ENCODE measurements at regions of chr1 and their contacts with region 1.

Region 1: DNA sequence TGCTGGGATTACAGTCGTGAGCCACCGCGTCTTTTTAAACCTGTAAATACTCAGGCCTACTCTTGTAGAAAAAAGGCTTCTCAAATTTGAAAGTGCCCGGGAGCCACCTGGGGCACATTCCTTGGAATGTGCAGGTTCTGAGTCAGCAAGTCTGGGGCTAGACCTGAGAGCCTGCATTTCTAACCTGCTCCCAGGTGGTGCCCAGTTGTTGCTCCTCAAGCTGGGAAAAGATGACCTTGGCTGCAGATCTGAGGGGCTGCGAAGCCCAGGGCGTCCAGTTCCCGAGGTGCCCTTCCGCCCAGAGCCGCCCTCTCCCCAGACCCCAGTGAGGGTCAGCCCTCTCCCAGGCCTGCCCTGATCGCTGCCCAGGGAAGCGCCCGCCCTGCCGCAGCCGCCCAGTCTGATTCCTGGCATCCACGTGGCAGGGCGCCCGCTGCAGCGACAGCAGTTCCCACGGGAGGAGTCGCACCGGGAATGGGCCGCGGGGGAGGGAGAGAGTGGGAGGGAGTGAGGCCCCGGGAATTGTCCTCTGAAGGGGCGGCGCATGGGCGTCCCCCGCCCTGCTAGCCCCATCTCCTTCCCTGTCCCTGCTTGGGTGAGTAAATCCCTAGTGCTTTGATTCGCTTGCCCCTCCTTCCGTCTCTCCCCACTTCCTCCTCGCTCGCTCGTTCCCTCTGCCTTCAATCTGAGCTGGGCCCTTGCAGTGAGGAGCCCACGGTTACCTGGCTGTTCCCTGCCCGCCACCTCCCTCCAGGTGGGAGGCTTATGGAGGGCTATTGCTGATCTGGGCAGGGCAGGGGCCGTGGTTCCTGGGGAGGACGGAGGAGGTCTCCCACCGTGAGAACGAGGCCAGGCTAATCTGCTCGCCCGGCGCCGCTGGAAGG is 18.8 kb upstream of the TENT5B start:
- DNase-seq: peak; percentile 87
- H3K4me3 ChIP-seq: peak overlapping the region in 1 of 3 experiments; percentile 23
- H3K27ac ChIP-seq: no peak overlapping the region
- H3K4me1 ChIP-seq: peaks cover 20% of the 10 kb centered on the region
- H3K27me3 ChIP-seq: peaks cover 0 to 2% of the 10 kb centered on the region in 2 experiments
- CTCF ChIP-seq: no peak
- POLR2A ChIP-seq: no peak

Region 2: DNA sequence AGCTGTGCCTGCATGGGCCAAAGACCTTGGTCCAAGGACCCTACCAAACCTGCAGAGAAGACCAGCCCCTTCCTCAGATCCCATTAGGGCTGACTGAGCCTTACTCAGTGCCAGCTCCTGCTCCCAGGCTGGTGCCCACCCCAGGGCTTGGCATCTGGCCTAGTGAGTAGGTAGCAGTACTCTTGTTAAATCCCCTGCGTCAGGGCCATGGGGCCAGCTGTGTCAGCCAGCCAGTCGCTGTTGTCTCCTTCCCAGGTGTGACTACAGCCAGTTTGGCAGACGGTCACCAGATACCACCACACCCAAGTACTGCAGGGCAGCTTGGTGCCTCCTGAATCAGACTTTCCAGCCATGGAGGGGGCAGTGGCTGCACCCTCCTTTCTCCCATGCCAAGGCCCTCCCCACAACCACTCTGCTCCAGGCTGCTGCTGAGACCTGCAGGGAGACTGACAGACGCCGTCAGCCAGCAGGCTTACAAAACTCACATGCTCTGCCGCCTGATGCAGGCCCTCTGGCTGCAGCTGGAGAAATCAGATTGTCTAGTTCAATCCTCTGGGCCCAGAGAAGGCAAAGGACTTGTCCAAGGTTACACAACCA is 21.8 kb before region 1 on chr1:
- CTCF ChIA-PET with region 1: interaction called, 3 read pairs
- POLR2A ChIA-PET with region 1: no interaction called
- dilution Hi-C with region 1: no loop called
- intact Hi-C with region 1: loop called (anchors 2 kb)
- DNase-seq: no peak
- H3K4me3 ChIP-seq: no peak overlapping the region
- H3K27ac ChIP-seq: no peak overlapping the region
- H3K4me1 ChIP-seq: peaks cover 8% of the 10 kb centered on the region
- H3K27me3 ChIP-seq: no peaks in the 10 kb centered on the region
- CTCF ChIP-seq: no peak
- POLR2A ChIP-seq: no peak

Region 3: GRCh38 chr1:27057389-27057788 is 25.9 kb after region 1 on chr1:
- CTCF ChIA-PET with region 1: no interaction called
- POLR2A ChIA-PET with region 1: no interaction called
- dilution Hi-C with region 1: no loop called
- intact Hi-C with region 1: no loop called
- DNase-seq: no peak
- H3K4me3 ChIP-seq: no peak overlapping the region
- H3K27ac ChIP-seq: no peak overlapping the region
- H3K4me1 ChIP-seq: no peaks in the 10 kb centered on the region
- H3K27me3 ChIP-seq: peaks cover 6 to 10% of the 10 kb centered on the region in 2 experiments
- CTCF ChIP-seq: no peak
- POLR2A ChIP-seq: no peak